ENCODE measurements at regions of chr15 and their contacts with region 1.

Region 1: GRCh38 chr15:51849860-51850259 is 20.4 kb downstream of the TMOD3 start:
- DNase-seq: no peak
- ATAC-seq: no peak
- H3K4me3 ChIP-seq: no peak overlapping the region
- H3K27ac ChIP-seq: no peak overlapping the region
- H3K4me1 ChIP-seq: no peaks in the 10 kb centered on the region
- H3K27me3 ChIP-seq: no peaks in the 10 kb centered on the region
- CTCF ChIP-seq: no peak
- EP300 ChIP-seq: no peak
- POLR2A ChIP-seq: no peak
- RAD21 ChIP-seq: no peak

Region 2: DNA sequence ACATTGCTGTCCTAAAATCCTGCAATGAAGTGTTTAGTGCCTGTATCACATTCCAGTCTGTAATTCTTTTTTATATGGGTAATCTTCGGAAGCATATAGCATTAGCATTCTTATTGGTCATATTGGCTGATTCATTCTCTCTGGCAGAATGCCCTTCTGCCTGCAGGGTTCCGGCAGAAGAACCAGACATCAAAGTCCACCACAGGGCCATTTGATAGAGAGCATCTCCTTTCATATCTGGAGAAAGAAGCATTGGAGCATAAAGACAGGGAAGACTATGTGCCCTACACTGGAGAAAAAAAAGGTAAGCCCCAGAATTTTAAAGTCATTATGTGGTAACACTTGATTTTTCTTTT is 19.2 kb after region 1 on chr15:
- CTCF ChIA-PET with region 1: interaction called, 4 read pairs
- POLR2A ChIA-PET with region 1: interaction called, 11 read pairs
- RAD21 ChIA-PET with region 1: no interaction called
- SMC1A ChIA-PET with region 1: interaction called, 3 read pairs
- in situ Hi-C with region 1: no loop called
- intact Hi-C with region 1: no loop called
- DNase-seq: no peak
- ATAC-seq: no peak
- H3K4me3 ChIP-seq: no peak overlapping the region
- H3K27ac ChIP-seq: no peak overlapping the region
- H3K4me1 ChIP-seq: no peaks in the 10 kb centered on the region
- H3K27me3 ChIP-seq: no peaks in the 10 kb centered on the region
- CTCF ChIP-seq: no peak
- EP300 ChIP-seq: no peak
- POLR2A ChIP-seq: no peak
- RAD21 ChIP-seq: no peak

Measured in GM12878 (cell line).